K562 (cell line): ENCODE measurements at regions of chrX and their contacts with region 1.

Region 1: GRCh38 chrX:136577552-136577951 is 45.5 kb downstream of the VGLL1 start:
- DNase-seq: peak; percentile 15 to 53 (median 26)
- ATAC-seq: peak; percentile 94
- H3K4me3 ChIP-seq: no peak overlapping the region
- H3K27ac ChIP-seq: no peak overlapping the region
- H3K4me1 ChIP-seq: no peaks in the 10 kb centered on the region
- H3K27me3 ChIP-seq: no peaks in the 10 kb centered on the region
- CTCF ChIP-seq: peak; percentile 65 to 71 (median 68)
- EP300 ChIP-seq: no peak
- POLR2A ChIP-seq: no peak
- RAD21 ChIP-seq: peak; percentile 62 to 81

Region 2: GRCh38 chrX:136168929-136169735 is 408.4 kb before region 1 on chrX:
- CTCF ChIA-PET with region 1: no interaction called
- POLR2A ChIA-PET with region 1: no interaction called
- in situ Hi-C with region 1: no loop called
- intact Hi-C with region 1: loop called (anchors 5 kb)
- DNase-seq: peak in 3 of 4 experiments; percentile 28 to 62 (median 57)
- ATAC-seq: no peak; the same call in 2 of the 3 replicates
- H3K4me3 ChIP-seq: no peak overlapping the region
- H3K27ac ChIP-seq: no peak overlapping the region
- H3K4me1 ChIP-seq: no peaks in the 10 kb centered on the region
- H3K27me3 ChIP-seq: peaks cover 22 to 36% of the 10 kb centered on the region in 2 experiments
- CTCF ChIP-seq: no peak
- EP300 ChIP-seq: no peak
- POLR2A ChIP-seq: no peak
- RAD21 ChIP-seq: no peak

Region 3: DNA sequence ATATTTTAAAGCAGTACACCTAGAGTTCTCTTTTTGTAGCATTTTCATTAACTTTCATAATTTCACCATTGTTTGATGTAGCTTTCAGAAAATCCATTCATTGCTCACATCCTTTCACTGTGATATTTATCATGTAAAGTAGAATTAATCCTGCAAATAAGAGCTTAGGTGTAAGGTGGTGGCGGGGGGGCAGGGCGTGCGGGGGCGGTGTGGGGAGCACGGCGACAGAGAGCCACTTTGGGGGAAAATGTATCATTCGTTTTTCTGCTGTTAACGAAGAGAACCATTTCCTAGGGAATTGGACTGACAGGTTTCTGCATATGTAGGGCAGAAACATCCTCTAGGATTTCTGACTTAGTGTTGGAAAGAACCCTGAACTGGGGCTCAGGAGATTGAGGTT is 172.4 kb before region 1 on chrX:
- CTCF ChIA-PET with region 1: no interaction called
- POLR2A ChIA-PET with region 1: no interaction called
- in situ Hi-C with region 1: no loop called
- intact Hi-C with region 1: loop called (anchors 10 kb)
- DNase-seq: no peak
- ATAC-seq: no peak
- H3K4me3 ChIP-seq: no peak overlapping the region
- H3K27ac ChIP-seq: no peak overlapping the region
- H3K4me1 ChIP-seq: no peaks in the 10 kb centered on the region
- H3K27me3 ChIP-seq: peaks cover 0 to 3% of the 10 kb centered on the region in 2 experiments; a peak in 2 of 5 replicates
- CTCF ChIP-seq: no peak
- EP300 ChIP-seq: no peak
- POLR2A ChIP-seq: no peak
- RAD21 ChIP-seq: no peak

Region 4: GRCh38 chrX:136519070-136519469 is 58.5 kb before region 1 on chrX:
- CTCF ChIA-PET with region 1: interaction called, 5 read pairs
- POLR2A ChIA-PET with region 1: no interaction called
- in situ Hi-C with region 1: no loop called
- intact Hi-C with region 1: loop called (anchors 2 kb)
- DNase-seq: no peak
- ATAC-seq: no peak
- H3K4me3 ChIP-seq: no peak overlapping the region
- H3K27ac ChIP-seq: no peak overlapping the region
- H3K4me1 ChIP-seq: no peaks in the 10 kb centered on the region
- H3K27me3 ChIP-seq: peaks cover 0 to 4% of the 10 kb centered on the region in 2 experiments; a peak in 4 of 5 replicates
- CTCF ChIP-seq: peak; percentile 24 to 41 (median 39); a peak in 3 of 6 replicates
- EP300 ChIP-seq: no peak
- POLR2A ChIP-seq: no peak
- RAD21 ChIP-seq: peak; percentile 42 to 60

Region 5: DNA sequence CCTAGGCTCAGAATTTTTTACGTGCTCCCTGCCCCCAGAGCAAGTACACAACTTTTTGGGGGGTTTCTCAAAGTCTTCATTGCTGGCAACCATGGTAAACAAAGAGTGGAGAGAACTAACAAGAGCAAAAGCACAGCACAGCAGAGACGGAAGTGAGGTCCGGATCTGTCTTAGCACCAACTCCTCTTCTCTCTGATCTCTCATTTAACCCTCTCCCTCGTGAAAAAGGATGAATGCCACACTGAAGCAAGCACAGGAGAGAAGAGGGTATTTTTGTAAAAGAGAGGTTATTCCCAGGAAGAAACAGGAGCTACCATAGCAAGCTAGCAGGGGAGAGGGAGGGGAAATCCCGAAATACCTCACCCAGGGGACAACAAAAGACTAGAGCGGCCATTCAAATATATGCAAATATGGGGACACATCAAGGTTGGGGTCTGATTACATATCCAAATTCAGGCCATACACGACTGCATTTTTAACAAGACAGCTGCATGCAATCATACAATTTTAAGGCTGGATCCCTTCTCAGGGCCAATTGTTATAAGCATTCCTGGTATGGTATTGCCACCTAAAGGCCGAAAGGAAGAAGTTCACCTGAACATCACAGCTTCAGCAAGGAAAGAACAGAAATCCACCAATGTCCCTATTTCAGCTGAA is 117.0 kb after region 1 on chrX:
- CTCF ChIA-PET with region 1: no interaction called
- POLR2A ChIA-PET with region 1: no interaction called
- in situ Hi-C with region 1: no loop called
- intact Hi-C with region 1: loop called (anchors 10 kb)
- DNase-seq: peak; percentile 21 to 52 (median 37)
- ATAC-seq: peak; percentile 82
- H3K4me3 ChIP-seq: no peak overlapping the region
- H3K27ac ChIP-seq: no peak overlapping the region
- H3K4me1 ChIP-seq: no peaks in the 10 kb centered on the region; a peak in 1 of 5 replicates
- H3K27me3 ChIP-seq: no peaks in the 10 kb centered on the region
- CTCF ChIP-seq: peak; percentile 58 to 75 (median 66)
- EP300 ChIP-seq: no peak
- POLR2A ChIP-seq: no peak
- RAD21 ChIP-seq: peak; percentile 66 to 81